ENCODE measurements at regions of chr3 and their contacts with region 1.

Region 1: DNA sequence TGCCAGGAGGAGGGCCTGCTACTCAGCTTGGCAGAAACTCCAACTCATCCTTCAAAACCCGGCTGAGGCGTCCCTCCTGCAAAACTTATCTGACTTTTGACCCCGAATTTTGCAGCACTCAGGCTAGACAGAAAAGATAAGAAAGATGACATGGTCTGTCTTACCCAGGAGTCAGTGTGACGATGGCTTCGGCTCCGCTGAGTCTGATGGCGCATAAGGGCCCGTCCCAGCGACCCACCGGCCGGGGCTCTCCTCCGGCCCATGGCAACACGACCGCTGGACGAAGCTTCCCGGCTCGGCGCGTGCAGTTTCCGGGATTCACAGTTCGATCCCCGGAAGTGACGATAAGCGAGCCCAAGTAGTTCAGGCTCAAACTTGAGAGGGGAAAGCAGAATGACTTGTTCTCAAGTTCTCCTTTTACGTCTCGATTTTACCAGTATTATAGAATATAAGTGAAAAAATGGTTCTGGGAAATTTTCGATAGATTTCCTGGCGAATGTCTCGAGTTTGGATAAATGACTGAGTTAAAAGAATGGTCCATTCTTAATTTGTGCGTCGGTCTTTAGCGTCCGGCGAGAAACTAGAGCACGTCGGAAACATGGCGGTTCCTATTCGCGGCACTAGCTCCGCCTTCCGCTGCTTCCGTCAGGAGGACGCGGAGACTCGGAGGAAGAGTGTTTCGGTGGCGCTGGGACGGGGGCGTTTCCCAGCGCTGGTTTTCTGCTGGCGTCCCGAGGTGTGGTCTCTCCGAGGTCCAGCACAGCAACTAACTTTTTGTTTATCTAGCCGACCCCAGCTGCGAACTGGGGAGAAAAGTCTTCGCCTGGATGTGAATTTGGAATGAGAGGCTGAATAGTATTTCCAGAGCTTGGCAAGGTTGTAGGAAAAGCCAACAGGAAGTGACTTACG is at the start of gene LSG1:
- DNase-seq: peak; percentile 87
- H3K4me3 ChIP-seq: peak within 1 kb of the TSS; percentile 95
- H3K27ac ChIP-seq: peak within 1 kb of the TSS; percentile 84
- H3K27me3 ChIP-seq: peaks cover 3% of the 10 kb centered on the region
- CTCF ChIP-seq: no peak
- polyA plus RNA-seq, gene LSG1: 30.2 and 34.0 TPM in 2 replicates

Region 2: DNA sequence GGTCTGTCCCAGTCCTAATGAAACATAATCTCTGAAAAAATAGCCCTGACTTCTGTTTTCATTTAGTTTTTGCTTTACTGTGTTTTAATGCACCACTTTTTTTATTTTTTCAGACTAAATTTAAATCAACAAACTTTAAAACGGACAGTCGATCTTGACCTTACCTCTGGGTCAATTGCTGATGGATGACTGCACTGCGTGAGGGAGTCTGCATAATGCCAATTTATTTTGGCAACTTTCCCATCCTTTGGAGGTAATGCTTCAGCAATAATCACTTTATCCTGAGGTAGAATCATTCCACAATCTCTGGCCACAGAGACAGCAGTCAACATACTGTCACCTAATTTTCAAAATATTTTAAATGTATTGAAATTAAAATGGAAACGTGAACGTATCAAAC is 240.6 kb before region 1 on chr3:
- CTCF ChIA-PET with region 1: no interaction called
- POLR2A ChIA-PET with region 1: no interaction called
- DNase-seq: no peak
- H3K4me3 ChIP-seq: no peak overlapping the region
- H3K27ac ChIP-seq: no peak overlapping the region
- H3K27me3 ChIP-seq: no peaks in the 10 kb centered on the region
- CTCF ChIP-seq: no peak

Region 3: GRCh38 chr3:194661374-194661773 is 10.8 kb before region 1 on chr3:
- CTCF ChIA-PET with region 1: interaction called, 18 read pairs
- POLR2A ChIA-PET with region 1: no interaction called
- DNase-seq: no peak
- H3K4me3 ChIP-seq: no peak overlapping the region
- H3K27ac ChIP-seq: no peak overlapping the region
- H3K27me3 ChIP-seq: no peaks in the 10 kb centered on the region
- CTCF ChIP-seq: no peak

Region 4: DNA sequence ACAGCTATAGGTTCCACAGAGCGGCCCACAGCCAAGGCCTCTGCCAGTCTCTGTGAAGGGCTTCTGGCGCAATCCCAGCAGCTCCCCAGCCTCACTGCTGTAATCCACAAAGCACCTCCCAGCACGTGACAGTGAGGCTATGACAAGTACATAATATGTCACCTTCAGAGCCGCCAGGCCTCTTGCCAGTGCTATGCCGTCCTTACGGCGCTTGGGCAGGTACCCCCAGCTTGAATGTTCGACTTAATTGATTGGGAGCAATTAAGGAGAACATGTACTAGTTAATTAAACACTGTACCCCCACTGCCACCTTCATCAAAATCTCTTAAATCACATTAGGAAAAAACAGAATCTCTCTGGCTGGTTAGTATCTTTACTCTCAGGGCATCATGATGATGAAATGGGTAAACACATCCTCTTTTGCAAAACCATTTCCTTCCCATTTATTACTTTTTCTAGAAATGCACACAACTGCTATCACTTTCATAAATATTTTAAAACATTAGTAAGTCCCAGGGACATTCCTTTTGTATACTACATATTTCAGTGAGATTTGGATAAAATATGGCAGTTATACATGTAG is 428.9 kb after region 1 on chr3:
- CTCF ChIA-PET with region 1: interaction called, 12 read pairs
- POLR2A ChIA-PET with region 1: no interaction called
- DNase-seq: no peak
- H3K4me3 ChIP-seq: no peak overlapping the region
- H3K27ac ChIP-seq: peak overlapping the region; percentile 47
- H3K27me3 ChIP-seq: no peaks in the 10 kb centered on the region
- CTCF ChIP-seq: no peak

Region 5: GRCh38 chr3:195259475-195260279 is 587.5 kb after region 1 on chr3:
- CTCF ChIA-PET with region 1: interaction called, 14 read pairs
- POLR2A ChIA-PET with region 1: interaction called, 3 read pairs
- DNase-seq: peak; percentile 78
- H3K4me3 ChIP-seq: peak overlapping the region; percentile 74
- H3K27ac ChIP-seq: peak overlapping the region; percentile 88
- H3K27me3 ChIP-seq: no peaks in the 10 kb centered on the region
- CTCF ChIP-seq: no peak